CD4-positive, alpha-beta memory T cell (primary cell): ENCODE measurements at regions of chr9 and their contacts with region 1.

Region 1: GRCh38 chr9:25557645-25558300 is 120.5 kb downstream of the TUSC1 start:
- DNase-seq: no peak
- H3K4me3 ChIP-seq: no peak overlapping the region
- H3K4me3 Mint-ChIP-seq: no peak overlapping the region
- H3K27ac ChIP-seq: no peak overlapping the region
- H3K27ac Mint-ChIP-seq: no peak overlapping the region
- H3K4me1 ChIP-seq: no peaks in the 10 kb centered on the region
- H3K4me1 Mint-ChIP-seq: no peaks in the 10 kb centered on the region
- H3K27me3 ChIP-seq: no peaks in the 10 kb centered on the region
- H3K27me3 Mint-ChIP-seq: no peaks in the 10 kb centered on the region

Region 2: DNA sequence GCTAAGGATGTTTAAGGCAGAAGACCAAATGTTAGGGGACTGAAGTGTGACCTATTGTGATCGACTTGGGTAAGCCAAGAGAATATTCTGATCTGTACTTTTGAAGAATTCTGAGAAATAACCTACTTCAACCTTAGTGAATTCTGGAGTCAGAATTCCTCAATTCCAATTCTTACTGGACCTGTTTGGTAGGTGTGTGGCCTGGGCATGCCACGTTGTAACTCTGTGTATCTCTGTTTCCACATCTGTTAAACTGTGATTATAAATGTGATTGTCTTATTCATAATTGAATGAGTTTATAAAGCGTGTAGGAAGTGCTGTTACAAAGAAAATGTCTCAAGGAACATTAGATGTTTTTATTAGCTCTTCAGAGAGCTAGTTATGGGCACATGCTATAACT is 55.9 kb after region 1 on chr9:
- CTCF ChIA-PET with region 1: no interaction called
- POLR2A ChIA-PET with region 1: no interaction called
- intact Hi-C with region 1: loop called (anchors 10 kb)
- DNase-seq: no peak
- H3K4me3 ChIP-seq: no peak overlapping the region
- H3K4me3 Mint-ChIP-seq: no peak overlapping the region
- H3K27ac ChIP-seq: no peak overlapping the region
- H3K27ac Mint-ChIP-seq: no peak overlapping the region
- H3K4me1 ChIP-seq: no peaks in the 10 kb centered on the region
- H3K4me1 Mint-ChIP-seq: no peaks in the 10 kb centered on the region
- H3K27me3 ChIP-seq: no peaks in the 10 kb centered on the region
- H3K27me3 Mint-ChIP-seq: no peaks in the 10 kb centered on the region